Left ventricle myocardium superior (tissue), 1 donor: ENCODE measurements at regions of chr3 and their contacts with region 1.

Region 1: DNA sequence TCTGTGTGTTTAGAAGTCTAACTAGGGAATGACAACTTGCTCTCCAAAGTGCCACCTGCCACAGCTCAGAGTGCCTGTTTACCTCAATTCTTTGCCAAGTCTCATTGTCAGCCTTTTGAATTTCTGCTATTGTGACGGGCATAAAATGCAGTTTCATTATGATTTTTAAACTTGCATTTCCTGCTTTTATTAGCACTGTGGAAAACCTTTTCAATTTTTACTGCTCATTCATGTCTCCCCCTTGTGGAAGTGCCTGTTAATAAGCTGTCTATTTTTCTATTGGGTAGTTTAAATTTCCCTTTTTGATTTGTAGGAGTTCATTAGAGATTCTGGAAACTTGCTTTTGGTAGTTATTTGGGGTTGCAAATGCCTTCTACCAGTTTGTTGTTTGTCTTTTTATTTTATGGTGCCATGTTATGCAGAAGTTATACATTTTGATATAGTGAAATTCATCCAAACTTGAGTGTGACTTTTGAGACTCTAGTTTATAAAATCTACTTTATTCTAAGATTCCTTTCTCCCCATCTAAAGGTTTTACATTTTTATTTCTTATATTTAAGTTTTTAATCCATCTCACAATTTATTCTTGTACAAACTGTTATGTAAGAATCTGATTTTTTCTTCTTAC is 53.9 kb upstream of the FRMD4B start:
- DNase-seq: no peak
- ATAC-seq: peak; percentile 30

Region 2: DNA sequence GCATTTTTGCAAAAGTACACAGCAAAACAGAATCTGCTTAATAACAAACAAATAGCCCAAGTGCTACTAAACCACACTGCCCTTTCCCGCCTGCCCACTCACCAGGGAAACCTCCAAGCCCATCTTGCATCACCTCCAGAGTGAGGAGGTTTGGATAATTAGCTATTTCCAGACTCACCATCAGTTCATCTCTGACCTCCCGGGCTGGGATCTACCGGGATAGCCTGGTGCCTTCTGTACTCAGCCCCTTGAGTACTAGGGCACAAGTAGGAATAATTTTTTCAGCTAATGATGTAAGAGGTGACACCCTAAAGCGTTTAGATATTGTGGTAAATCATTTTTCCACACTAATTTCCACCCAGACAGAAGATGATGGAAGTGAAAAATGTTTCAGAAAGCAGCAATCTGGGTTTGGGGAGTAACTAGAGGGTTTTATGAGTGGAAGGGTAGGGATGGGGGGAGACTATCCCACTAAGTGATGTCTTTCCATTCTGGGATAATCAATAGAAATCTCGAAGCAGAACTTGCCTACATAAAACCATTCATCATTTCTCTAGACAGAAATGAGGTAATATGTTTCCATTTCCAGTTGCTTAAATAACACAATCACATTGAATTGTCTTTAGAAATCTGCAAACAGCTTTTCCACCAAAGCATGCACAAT is 548.3 kb before region 1 on chr3:
- intact Hi-C with region 1: no loop called
- DNase-seq: no peak
- ATAC-seq: no peak

Region 3: DNA sequence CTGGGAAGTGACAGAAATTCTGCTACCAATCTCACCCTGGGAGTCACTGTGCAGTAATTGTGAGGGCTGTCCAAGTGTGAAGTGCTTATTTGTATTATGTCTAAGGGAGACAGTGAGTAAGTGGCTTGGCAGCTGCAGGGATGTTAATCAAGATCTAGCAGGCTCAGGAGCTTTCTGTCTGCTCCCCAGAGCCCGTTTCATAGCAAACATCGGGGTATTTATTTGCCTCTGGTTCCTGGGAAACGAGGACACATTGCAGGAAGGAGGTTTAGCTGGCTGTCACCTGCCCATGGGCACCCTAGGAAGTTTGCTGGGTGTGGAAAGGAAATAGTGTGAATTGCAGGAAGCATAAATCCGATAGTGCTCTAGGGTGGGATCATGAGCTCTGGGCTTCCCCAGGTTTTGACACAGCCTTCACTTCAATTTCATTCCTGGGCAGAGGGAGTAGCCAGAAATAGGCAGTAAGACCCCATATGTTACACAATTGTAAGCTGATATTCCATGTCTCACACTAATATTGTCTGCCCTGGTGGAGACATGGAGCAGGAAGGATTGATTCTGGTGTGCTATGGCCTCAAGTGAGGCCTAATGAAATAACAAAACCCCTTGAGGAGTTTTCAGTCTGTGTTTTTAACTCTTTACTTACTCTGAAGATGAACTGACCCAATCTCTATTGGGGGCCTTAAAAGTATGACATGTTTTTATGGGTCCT is 225.4 kb after region 1 on chr3:
- intact Hi-C with region 1: loop called (anchors 10 kb)
- DNase-seq: no peak
- ATAC-seq: peak; percentile 94